ENCODE measurements at regions of chr2 and their contacts with region 1.

Region 1: DNA sequence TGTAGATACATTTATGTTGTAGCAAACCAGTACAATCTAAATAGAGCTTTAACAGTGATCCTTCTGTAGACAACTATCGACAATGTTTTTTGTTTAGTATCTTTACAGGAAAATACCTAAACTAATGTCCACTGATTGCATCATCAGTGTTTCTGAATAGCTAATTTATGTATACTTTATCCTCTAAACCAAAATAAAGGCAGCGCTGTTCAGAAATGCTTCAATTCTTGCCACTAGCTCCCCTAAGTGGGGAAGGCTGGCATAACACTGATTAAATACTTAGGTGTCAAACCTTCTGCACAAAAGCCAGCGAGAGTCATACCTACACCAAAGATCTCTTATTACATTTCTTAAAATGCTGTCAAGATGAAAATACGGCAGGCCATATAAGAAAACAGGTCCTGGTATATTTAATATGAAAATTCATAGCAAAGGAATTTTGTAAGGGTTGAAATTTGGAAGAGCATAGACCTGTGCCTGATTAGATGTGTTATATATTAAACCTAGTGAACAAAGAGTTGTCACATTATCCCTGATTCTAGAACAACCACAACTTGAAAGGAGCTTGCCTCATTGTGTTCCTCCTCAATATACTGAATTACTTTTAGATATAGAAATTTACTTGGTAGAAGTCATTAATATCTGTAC is 1693.4 kb upstream of the SLC39A10 start:
- DNase-seq: peak; percentile 78
- H3K4me3 ChIP-seq: no peak overlapping the region
- H3K27ac ChIP-seq: no peak overlapping the region
- H3K4me1 ChIP-seq: peaks cover 4% of the 10 kb centered on the region
- H3K27me3 ChIP-seq: no peaks in the 10 kb centered on the region
- CTCF ChIP-seq: peak; percentile 73

Region 2: GRCh38 chr2:193695367-193695766 is 268.2 kb before region 1 on chr2:
- CTCF ChIA-PET with region 1: interaction called, 5 read pairs
- POLR2A ChIA-PET with region 1: no interaction called
- intact Hi-C with region 1: loop called (anchors 1 kb)
- DNase-seq: peak; percentile 60
- H3K4me3 ChIP-seq: no peak overlapping the region
- H3K27ac ChIP-seq: no peak overlapping the region
- H3K4me1 ChIP-seq: no peaks in the 10 kb centered on the region
- H3K27me3 ChIP-seq: no peaks in the 10 kb centered on the region
- CTCF ChIP-seq: peak; percentile 66

Region 3: DNA sequence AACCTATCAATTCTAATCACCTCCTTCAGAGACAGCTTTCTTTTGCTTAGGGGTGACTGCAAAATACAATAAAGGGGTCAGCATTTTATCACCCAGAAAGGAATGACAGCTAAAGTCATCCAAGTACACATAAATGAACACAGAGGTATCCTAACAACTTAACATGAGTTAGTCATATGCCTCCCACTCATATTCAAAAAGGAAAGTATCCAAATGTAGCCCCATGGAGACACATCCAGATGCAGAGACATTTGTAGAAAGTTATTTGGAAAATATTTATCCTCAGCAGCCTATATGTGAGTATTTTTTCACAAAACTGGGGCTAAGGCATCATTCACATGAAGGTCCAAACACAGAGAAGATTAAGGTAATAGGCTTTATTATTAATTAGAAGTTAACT is 113.8 kb after region 1 on chr2:
- CTCF ChIA-PET with region 1: no interaction called
- POLR2A ChIA-PET with region 1: no interaction called
- intact Hi-C with region 1: no loop called
- DNase-seq: no peak
- H3K4me3 ChIP-seq: no peak overlapping the region
- H3K27ac ChIP-seq: no peak overlapping the region
- H3K4me1 ChIP-seq: no peaks in the 10 kb centered on the region
- H3K27me3 ChIP-seq: no peaks in the 10 kb centered on the region
- CTCF ChIP-seq: no peak

Region 4: DNA sequence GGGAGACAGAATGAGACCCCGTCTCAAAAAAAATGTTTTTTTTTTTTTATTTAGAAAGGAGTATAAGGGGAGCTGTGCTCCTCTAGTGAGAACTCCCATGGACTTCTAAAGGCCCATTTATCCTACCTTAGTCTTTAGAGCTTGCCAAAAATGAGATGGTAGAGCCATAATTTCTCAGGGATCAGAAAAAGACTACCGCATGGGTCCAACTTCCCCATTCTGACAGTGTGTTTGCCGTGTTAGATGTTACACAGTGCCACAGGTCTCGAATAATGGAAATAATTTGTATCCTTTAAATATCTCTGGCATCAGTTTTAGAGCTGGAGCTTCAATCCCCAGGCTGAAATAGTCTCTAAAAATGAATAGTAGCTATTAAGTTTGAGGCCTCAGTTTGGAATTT is 1687.5 kb after region 1 on chr2:
- CTCF ChIA-PET with region 1: no interaction called
- POLR2A ChIA-PET with region 1: interaction called, 11 read pairs
- intact Hi-C with region 1: no loop called
- DNase-seq: no peak
- H3K4me3 ChIP-seq: no peak overlapping the region
- H3K27ac ChIP-seq: no peak overlapping the region
- H3K4me1 ChIP-seq: no peaks in the 10 kb centered on the region
- H3K27me3 ChIP-seq: no peaks in the 10 kb centered on the region
- CTCF ChIP-seq: no peak